ENCODE measurements at regions of chr1 and their contacts with region 1.

Region 1: DNA sequence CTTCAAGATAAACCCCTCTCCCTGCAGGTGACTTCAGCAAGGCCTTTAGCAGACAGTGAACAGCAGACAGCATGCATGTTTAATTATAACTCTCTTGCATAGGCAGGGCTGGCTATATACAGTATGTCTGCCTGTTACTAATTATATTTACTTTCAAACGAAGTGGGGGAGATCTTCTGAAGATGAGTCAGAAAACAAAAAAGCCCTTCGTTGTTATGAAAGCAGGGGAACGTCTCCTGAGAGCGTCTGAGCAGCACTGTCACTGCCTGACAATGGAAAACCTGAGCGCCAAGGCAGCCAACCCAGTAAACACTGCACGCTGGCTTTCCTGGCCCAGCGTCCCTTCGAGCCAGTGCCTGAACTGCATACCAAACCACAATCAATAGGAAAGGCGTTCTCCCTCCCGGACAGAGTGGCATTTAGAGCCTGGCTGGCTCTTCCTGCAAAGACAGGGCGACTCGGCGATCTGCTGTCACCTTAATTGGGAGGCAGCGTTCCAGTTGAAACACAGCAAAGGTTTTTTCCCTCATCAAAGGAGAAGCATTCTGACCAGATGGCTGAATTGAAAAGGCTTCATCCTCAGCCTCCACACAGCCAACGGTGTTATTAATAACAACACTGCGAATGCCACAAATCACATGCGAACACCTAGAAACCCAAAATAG is 54.0 kb downstream of the TOMM20 start:
- ATAC-seq: peak; percentile 44 to 86 (median 78)
- H3K4me3 ChIP-seq: no peak overlapping the region
- H3K27ac ChIP-seq: peak overlapping the region; percentile 75
- H3K4me1 ChIP-seq: peaks cover 27 to 35% of the 10 kb centered on the region in 2 donors

Region 2: DNA sequence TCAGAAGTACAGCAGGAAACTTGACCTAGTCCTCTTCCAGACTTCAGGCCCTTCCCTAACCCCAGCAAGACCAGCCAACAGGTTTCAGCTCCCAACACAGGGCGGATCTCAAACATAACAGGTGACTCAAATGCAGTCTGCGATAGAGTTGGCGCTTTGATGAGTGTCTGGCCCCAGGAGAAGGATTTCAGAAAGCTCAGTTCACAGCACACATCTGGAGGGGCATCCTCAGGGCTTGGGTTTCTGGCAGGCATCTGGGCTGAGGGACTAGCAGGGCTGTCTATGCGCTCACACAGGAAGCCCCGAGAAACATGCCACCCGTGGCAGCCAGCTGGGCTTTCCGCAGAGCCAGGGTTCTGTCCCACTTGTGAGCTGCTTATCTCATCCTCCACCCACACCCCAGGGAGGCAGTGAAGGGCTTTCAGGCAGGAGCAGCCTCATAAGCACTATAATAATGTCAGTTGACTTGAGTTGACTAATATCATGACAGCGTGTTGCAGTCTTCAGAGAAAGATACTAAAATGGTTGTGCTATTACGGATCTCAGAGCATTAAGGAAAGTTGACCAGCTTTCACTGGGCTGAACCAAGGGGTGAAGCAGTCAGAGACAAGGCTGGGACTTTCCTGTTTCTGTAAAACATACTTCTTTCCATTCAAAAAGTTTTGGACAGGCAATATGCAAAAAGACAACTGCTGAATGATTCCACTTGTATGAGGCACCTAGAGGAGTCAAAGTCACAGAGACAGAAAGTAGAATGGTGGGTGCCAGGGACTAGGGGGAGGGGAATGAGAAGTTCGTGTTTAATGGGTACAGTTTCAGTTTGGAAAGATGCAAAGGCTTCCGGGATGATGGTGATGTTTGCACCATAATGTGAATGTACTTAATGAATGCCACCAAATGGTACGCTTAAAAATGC is 231.7 kb before region 1 on chr1:
- in situ Hi-C with region 1: loop called in 1 of 9 experiments (anchors 25 kb)
- ATAC-seq: peak in 5 of 8 experiments; percentile 60 to 79 (median 67)
- H3K4me3 ChIP-seq: no peak overlapping the region
- H3K27ac ChIP-seq: no peak overlapping the region
- H3K4me1 ChIP-seq: peaks cover 15 to 18% of the 10 kb centered on the region in 2 donors

Region 3: GRCh38 chr1:234925440-234926263 is 149.0 kb before region 1 on chr1:
- in situ Hi-C with region 1: no loop called
- ATAC-seq: peak; percentile 59 to 99 (median 91)
- H3K4me3 ChIP-seq: no peak overlapping the region
- H3K27ac ChIP-seq: peak overlapping the region; percentile 1 to 38
- H3K4me1 ChIP-seq: peaks cover 34 to 39% of the 10 kb centered on the region in 2 donors